Common myeloid progenitor, CD34-positive (primary cell): ENCODE measurements at regions of chr16 and their contacts with region 1.

Region 1: DNA sequence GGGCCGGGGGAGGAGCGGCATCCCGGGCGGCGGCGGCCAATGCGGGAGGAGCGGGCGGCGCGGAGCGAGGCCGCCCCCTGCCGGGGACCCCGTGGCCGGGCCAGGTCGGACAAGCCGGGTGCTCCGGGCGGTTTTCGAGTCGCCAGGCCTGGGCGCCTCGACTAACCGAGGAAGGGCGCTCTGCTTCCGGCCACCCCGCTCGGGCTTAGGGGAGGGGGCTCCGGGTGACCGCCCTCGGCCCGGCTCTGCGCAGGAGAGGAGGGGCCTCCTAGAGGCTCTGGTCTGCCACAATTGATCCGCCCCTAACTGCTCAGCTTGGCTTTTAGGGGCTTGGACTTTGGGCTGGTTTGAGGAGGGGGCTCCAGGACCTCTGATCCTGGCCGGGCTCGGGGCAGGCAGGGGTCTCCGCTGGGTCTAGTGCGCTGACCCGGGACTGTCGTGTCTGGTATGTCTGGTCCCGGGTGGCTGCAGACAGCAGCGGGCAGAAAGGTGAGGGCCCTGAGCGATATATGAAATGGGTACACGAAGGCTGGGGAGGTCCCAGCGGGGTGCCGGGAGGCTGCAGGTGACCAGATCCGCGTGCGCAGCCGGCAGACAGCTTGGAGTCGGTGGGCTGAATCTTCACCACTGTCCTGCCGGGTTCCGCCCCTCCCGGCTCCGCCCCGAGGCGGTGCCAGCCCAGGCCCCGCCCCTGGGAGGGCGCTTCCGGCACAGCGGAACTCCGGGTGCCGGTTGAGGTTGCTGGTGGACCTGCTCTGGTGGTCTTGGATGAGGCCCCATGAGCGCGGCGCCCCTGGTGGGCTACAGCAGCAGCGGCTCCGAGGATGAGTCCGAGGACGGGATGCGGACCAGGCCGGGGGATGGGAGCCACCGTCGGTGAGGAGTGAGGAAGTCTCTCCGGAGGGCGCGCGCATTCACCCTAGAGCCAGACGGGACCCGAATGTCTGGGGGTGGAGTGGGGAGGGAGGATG is at the start of gene USB1:
- DNase-seq: peak; percentile 92 to 94 (median 94)
- H3K4me3 ChIP-seq: peak within 1 kb of the TSS; percentile 70 to 89 (median 80)
- H3K27ac ChIP-seq: peak within 1 kb of the TSS in 1 of 2 experiments; percentile 77
- H3K4me1 ChIP-seq: peaks cover 4 to 35% (median 24%) of the 10 kb centered on the region in 4 experiments
- H3K27me3 ChIP-seq: no peaks in the 10 kb centered on the region

Region 2: GRCh38 chr16:57899771-57900661 is 101.0 kb before region 1 on chr16:
- CTCF ChIA-PET with region 1: interaction called, 61 read pairs
- POLR2A ChIA-PET with region 1: no interaction called
- DNase-seq: peak; percentile 81 to 87 (median 82)
- H3K4me3 ChIP-seq: no peak overlapping the region
- H3K27ac ChIP-seq: no peak overlapping the region
- H3K4me1 ChIP-seq: no peaks in the 10 kb centered on the region
- H3K27me3 ChIP-seq: no peaks in the 10 kb centered on the region